CD4-positive, alpha-beta memory T cell (primary cell): ENCODE measurements at regions of chr19 and their contacts with region 1.

Region 1: GRCh38 chr19:54266133-54266532 is 9.1 kb upstream of the LILRB5 start:
- DNase-seq: peak; percentile 42 to 67 (median 50)
- H3K4me3 ChIP-seq: no peak overlapping the region
- H3K4me3 Mint-ChIP-seq: peak overlapping the region in 1 of 8 donors; percentile 52
- H3K27ac ChIP-seq: no peak overlapping the region
- H3K27ac Mint-ChIP-seq: no peak overlapping the region
- H3K4me1 ChIP-seq: no peaks in the 10 kb centered on the region
- H3K4me1 Mint-ChIP-seq: peaks cover 0 to 2% (median 0%) of the 10 kb centered on the region in 4 donors
- H3K27me3 ChIP-seq: no peaks in the 10 kb centered on the region
- H3K27me3 Mint-ChIP-seq: peaks cover 6 to 22% of the 10 kb centered on the region in 2 donors

Region 2: GRCh38 chr19:53772943-53773342 is 493.2 kb before region 1 on chr19:
- CTCF ChIA-PET with region 1: no interaction called
- POLR2A ChIA-PET with region 1: no interaction called
- intact Hi-C with region 1: loop called (anchors 10 kb)
- DNase-seq: peak; percentile 32 to 47 (median 46)
- H3K4me3 ChIP-seq: no peak overlapping the region
- H3K4me3 Mint-ChIP-seq: peak overlapping the region in 1 of 8 donors; percentile 18
- H3K27ac ChIP-seq: no peak overlapping the region
- H3K27ac Mint-ChIP-seq: no peak overlapping the region
- H3K4me1 ChIP-seq: no peaks in the 10 kb centered on the region
- H3K4me1 Mint-ChIP-seq: peaks cover 0 to 5% (median 2%) of the 10 kb centered on the region in 4 donors
- H3K27me3 ChIP-seq: no peaks in the 10 kb centered on the region
- H3K27me3 Mint-ChIP-seq: peaks cover 0 to 6% of the 10 kb centered on the region in 2 donors

Region 3: DNA sequence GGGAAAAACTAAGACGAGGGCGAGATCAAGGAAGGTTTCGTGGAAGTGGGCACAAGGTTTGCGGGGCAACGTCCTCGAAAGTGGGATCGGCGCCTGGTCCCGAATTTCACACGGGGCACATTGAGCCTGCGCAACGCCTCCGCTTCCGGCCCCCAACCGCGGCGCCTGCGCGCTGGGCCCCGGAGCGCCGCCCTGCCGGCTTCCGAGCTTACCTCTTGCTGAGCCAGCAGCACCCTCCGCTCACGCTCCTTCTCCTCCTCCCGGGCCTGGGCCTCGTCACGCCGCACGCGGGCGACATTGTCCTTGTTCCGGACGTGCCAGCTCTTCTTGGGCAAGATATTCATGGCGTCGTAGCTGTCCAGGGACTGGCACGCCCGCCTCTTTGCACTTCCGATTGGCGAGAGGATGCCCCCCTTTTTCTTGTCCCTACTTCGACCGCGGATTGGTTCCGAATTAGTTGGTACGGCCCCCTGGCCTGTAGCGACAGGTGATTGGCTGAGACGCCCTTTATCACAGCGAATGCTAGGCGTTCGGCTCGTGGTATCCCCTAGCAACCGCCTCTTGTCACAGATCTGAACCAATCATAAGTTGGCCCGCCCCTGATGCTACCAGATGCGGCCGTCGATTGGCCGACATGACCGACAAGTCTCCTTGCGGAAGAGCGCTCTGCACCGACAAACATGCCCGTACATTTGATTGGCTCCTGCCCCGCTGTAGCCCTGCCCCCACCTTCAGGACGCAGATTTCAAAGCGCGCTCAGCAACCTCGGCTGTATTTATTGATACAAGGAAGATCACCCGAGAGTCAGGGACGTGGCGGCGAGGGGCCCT is 106.6 kb before region 1 on chr19 and contains the start of gene LENG1:
- CTCF ChIA-PET with region 1: interaction called, 19 read pairs
- POLR2A ChIA-PET with region 1: interaction called, 4 read pairs
- intact Hi-C with region 1: no loop called
- DNase-seq: peak; percentile 97 to 100 (median 100)
- H3K4me3 ChIP-seq: peak within 1 kb of the TSS; percentile 61 to 99
- H3K4me3 Mint-ChIP-seq: peak within 1 kb of the TSS; percentile 99 to 100 (median 100)
- H3K27ac ChIP-seq: peak within 1 kb of the TSS; percentile 78
- H3K27ac Mint-ChIP-seq: peak within 1 kb of the TSS; percentile 93 to 100 (median 100)
- H3K4me1 ChIP-seq: peaks cover 75% of the 10 kb centered on the region
- H3K4me1 Mint-ChIP-seq: peaks cover 39 to 85% (median 58%) of the 10 kb centered on the region in 4 donors
- H3K27me3 ChIP-seq: no peaks in the 10 kb centered on the region
- H3K27me3 Mint-ChIP-seq: no peaks in the 10 kb centered on the region
- total RNA-seq, gene LENG1: 19.6 to 22.7 TPM

Region 4: GRCh38 chr19:54168174-54168917 is 97.8 kb before region 1 on chr19:
- CTCF ChIA-PET with region 1: interaction called, 115 read pairs
- POLR2A ChIA-PET with region 1: interaction called, 11 read pairs
- intact Hi-C with region 1: no loop called
- DNase-seq: peak; percentile 79 to 83 (median 81)
- H3K4me3 ChIP-seq: no peak overlapping the region
- H3K4me3 Mint-ChIP-seq: peak overlapping the region in 2 of 8 donors; percentile 26 to 31
- H3K27ac ChIP-seq: no peak overlapping the region
- H3K27ac Mint-ChIP-seq: peak overlapping the region in 2 of 7 donors; percentile 41 to 58
- H3K4me1 ChIP-seq: peaks cover 23% of the 10 kb centered on the region
- H3K4me1 Mint-ChIP-seq: peaks cover 3 to 28% (median 11%) of the 10 kb centered on the region in 4 donors
- H3K27me3 ChIP-seq: no peaks in the 10 kb centered on the region
- H3K27me3 Mint-ChIP-seq: no peaks in the 10 kb centered on the region

Region 5: DNA sequence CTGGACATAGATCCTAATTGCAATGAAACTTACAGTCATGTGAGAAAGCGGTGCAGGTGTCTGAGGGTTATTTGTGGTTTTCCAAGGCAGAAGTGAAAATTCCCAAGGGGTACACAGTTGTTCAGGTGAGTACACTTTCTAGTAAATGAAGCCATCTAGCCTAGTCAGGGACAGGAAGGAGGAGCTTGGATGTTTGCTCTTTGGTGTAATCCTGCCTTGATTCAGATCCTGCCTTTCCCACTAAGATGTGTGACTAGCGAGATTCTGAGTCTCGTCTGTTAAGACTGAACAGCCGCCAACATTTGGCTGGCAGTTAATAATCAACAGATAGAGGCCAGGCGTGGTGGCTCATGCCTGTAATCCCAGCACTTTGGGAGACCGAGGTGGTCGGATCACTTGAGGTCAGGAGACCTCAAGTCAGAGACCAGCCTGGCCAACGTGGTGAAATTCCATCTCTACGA is 63.0 kb before region 1 on chr19:
- CTCF ChIA-PET with region 1: interaction called, 4 read pairs
- POLR2A ChIA-PET with region 1: interaction called, 16 read pairs
- intact Hi-C with region 1: no loop called
- DNase-seq: no peak
- H3K4me3 ChIP-seq: no peak overlapping the region
- H3K4me3 Mint-ChIP-seq: peak overlapping the region; percentile 10 to 100 (median 64)
- H3K27ac ChIP-seq: peak overlapping the region; percentile 89
- H3K27ac Mint-ChIP-seq: peak overlapping the region in 6 of 7 donors; percentile 66 to 99 (median 85)
- H3K4me1 ChIP-seq: peaks cover 74% of the 10 kb centered on the region
- H3K4me1 Mint-ChIP-seq: peaks cover 44 to 86% (median 62%) of the 10 kb centered on the region in 4 donors
- H3K27me3 ChIP-seq: no peaks in the 10 kb centered on the region
- H3K27me3 Mint-ChIP-seq: no peaks in the 10 kb centered on the region

Region 6: DNA sequence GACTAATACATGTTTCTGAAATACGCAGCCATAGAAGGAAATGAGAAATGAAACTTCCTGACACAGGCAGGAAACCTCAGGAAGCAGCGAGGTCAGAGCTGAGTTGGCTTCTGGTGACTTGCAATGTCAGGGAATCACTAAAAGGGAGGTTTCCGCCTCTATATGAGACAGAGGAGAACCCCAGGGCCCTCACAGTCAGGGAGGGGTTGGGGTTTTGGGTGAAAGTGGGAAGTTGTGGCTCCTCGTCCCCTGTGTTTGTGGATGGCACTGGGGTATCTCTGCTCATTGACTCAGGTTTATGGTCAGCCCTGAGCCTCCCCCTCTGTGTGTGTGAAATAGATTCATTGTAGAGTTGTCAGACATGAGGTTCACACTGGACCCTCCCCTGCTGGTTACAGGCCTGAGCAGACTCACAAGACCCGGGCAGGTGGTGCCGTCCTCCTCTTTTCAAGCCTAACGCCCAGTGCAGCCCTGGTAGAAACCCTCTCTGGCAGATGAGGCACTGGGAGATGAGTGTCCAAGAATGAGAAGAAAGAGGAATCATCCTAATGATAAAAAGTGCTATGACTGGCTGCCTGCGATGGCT is 18.0 kb before region 1 on chr19:
- CTCF ChIA-PET with region 1: interaction called, 21 read pairs
- POLR2A ChIA-PET with region 1: interaction called, 3 read pairs
- intact Hi-C with region 1: no loop called
- DNase-seq: peak in 1 of 5 donors; percentile 18
- H3K4me3 ChIP-seq: no peak overlapping the region
- H3K4me3 Mint-ChIP-seq: peak overlapping the region in 7 of 8 donors; percentile 29 to 83 (median 69)
- H3K27ac ChIP-seq: no peak overlapping the region
- H3K27ac Mint-ChIP-seq: peak overlapping the region; percentile 23 to 94 (median 66)
- H3K4me1 ChIP-seq: peaks cover 15% of the 10 kb centered on the region
- H3K4me1 Mint-ChIP-seq: peaks cover 6 to 16% (median 9%) of the 10 kb centered on the region in 4 donors
- H3K27me3 ChIP-seq: no peaks in the 10 kb centered on the region
- H3K27me3 Mint-ChIP-seq: no peaks in the 10 kb centered on the region